Esophagus muscularis mucosa (tissue), 4 donors: ENCODE measurements at regions of chr17 and their contacts with region 1.

Region 1: DNA sequence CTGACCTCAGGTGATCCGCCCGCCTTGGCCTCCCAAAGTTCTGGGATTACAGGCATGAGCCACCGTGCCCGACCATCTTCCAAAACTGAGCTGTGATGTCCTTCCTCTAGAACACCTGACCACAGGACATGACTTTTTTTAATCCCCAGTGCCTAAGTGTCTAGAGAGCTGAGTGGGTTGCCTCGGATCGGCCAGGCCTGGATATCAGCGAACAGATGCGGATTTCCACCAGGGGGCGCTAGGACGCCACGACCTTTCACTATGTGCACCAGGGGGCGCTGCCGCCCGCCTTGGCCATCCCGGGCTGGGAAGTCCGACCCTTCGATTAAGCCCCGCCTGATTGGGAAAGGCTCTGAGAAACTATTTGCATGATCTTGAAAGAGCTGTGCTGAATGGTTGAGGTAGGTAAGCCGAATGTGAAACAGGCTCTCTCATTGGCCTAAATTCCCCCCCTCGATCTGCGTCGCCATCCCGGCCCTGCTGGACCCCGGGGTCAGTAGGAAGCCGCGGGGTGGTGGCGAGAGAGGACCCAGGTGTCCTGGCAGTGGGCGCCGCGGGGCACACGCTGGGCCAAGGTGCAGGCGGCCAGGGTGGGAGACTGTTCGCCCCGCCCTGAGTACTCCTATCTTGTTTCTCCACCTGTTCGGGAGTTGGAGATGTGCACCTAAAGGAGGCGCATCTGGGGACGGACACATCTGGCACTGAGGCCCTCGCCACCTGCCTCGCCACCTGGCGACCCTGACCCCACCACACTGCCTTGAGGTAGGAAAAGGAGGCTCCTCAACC is at the start of gene ACBD4:
- DNase-seq: peak; percentile 99
- H3K4me3 ChIP-seq: peak within 1 kb of the TSS; percentile 76 to 96 (median 84)
- H3K27ac ChIP-seq: peak within 1 kb of the TSS; percentile 89 to 93 (median 92)
- H3K4me1 ChIP-seq: peaks cover 27 to 50% (median 40%) of the 10 kb centered on the region in 4 donors
- H3K27me3 ChIP-seq: no peaks in the 10 kb centered on the region
- CTCF ChIP-seq: peak; percentile 96 to 100 (median 100)
- EP300 ChIP-seq: no peak
- POLR2A ChIP-seq: no peak
- total RNA-seq, gene ACBD4: 20.9 to 34.8 (median 23.5) TPM

Region 2: DNA sequence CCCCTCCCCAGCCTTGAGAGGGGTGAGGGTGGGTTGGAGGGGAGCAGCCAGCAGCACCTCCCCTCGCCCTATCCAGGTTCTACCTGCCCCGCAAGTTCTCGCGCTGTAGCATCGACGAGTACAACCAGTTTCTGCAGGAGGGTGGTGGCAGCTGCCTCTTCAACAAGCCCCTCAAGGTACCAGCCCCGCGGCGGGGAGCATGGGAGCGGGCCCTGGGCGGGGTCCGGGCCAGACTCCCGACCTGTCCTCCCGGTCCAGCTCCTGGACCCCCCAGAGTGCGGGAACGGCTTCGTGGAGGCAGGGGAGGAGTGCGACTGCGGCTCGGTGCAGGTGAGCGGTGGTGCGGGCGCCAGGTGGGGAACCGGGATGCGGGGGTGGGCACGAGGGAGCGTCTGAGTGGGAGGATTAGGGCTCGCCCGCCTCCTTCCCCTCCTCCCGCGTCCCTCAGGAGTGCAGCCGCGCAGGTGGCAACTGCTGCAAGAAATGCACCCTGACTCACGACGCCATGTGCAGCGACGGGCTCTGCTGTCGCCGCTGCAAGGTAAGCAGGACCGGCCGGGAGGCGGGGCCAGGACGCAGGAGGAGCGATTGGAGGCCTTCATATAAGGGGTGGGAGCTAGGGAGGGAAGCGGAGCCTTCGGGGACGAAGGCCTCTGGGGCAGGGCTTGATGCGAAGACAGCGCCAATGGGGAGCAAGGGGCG is 360.1 kb before region 1 on chr17:
- intact Hi-C with region 1: loop called (anchors 5 kb)
- DNase-seq: peak; percentile 98
- H3K4me3 ChIP-seq: peak overlapping the region; percentile 60 to 67 (median 63)
- H3K27ac ChIP-seq: peak overlapping the region; percentile 5 to 80 (median 70)
- H3K4me1 ChIP-seq: peaks cover 25 to 39% (median 36%) of the 10 kb centered on the region in 4 donors
- H3K27me3 ChIP-seq: peaks cover 0 to 35% (median 9%) of the 10 kb centered on the region in 4 donors
- CTCF ChIP-seq: peak in 1 of 3 experiments; percentile 21
- EP300 ChIP-seq: no peak
- POLR2A ChIP-seq: no peak

Region 3: GRCh38 chr17:44919885-44920564 is 215.4 kb before region 1 on chr17:
- intact Hi-C with region 1: loop called (anchors 5 kb)
- DNase-seq: no peak
- H3K4me3 ChIP-seq: no peak overlapping the region
- H3K27ac ChIP-seq: peak overlapping the region in 1 of 4 donors; percentile 5
- H3K4me1 ChIP-seq: peaks cover 25 to 36% (median 29%) of the 10 kb centered on the region in 4 donors
- H3K27me3 ChIP-seq: peaks cover 0 to 2% (median 0%) of the 10 kb centered on the region in 4 donors
- CTCF ChIP-seq: peak; percentile 81 to 94 (median 88)
- EP300 ChIP-seq: no peak
- POLR2A ChIP-seq: no peak

Region 4: GRCh38 chr17:45051060-45051719 is 84.2 kb before region 1 on chr17 and contains the start of gene DCAKD:
- intact Hi-C with region 1: loop called (anchors 5 kb)
- DNase-seq: peak; percentile 94
- H3K4me3 ChIP-seq: peak within 1 kb of the TSS; percentile 61 to 79 (median 66)
- H3K27ac ChIP-seq: peak within 1 kb of the TSS; percentile 89 to 96 (median 92)
- H3K4me1 ChIP-seq: peaks cover 12 to 35% (median 30%) of the 10 kb centered on the region in 4 donors
- H3K27me3 ChIP-seq: no peaks in the 10 kb centered on the region
- CTCF ChIP-seq: peak in 1 of 3 experiments; percentile 10
- EP300 ChIP-seq: no peak
- POLR2A ChIP-seq: peak; percentile 78
- total RNA-seq, gene DCAKD: 50.3 to 68.8 (median 57.9) TPM

Region 5: GRCh38 chr17:45098869-45099616 is 36.3 kb before region 1 on chr17:
- intact Hi-C with region 1: loop called (anchors 5 kb)
- DNase-seq: peak; percentile 96
- H3K4me3 ChIP-seq: no peak overlapping the region
- H3K27ac ChIP-seq: peak overlapping the region; percentile 61 to 91 (median 76)
- H3K4me1 ChIP-seq: peaks cover 42 to 54% (median 48%) of the 10 kb centered on the region in 4 donors
- H3K27me3 ChIP-seq: no peaks in the 10 kb centered on the region
- CTCF ChIP-seq: peak; percentile 85 to 92 (median 90)
- EP300 ChIP-seq: no peak
- POLR2A ChIP-seq: no peak

Region 6: DNA sequence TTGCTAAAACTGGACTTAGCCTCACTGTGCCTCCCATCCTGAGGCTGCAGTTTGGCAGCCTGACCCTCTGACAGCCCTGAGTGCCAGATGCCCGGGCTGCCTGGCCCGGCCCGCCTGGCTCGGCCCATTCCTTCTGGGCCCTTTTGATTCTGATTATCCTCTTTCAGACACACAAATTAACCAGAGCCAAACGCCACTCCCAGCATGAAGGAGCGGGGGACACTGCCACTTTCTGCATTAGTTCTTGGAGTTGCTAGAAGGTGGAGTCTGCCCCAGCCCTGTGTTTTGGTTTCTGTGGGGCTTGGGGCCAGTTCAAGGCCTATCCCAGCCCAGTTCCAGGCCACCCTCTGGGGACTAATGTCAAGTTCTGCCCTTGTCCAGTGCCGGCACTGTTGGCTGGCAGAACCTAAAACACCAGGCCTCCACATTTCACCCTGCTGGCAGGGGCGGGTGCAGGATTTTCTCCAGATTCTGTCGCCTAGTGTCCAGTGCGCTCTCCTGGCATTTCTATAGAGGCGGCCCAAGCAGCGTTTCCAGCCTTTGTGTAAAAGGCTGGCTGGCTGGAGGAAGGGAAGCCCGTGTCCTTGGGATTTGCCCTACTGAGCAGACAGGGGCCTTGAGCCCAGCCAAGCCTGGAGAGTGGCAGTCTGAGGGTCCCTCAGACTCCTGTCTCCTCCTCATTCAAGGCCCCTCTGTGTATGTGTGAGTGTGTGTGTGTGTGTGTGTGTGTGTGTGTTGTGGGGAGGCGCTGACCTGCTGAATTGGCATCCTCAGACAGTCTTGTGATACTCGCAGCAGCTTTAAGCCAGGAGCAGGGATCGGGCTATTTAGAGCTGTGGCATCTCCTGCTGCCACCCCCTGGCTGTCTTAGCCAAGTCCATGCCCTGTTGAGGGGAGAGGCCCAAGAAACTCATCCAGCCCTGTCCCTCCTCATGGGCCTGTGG is 24.4 kb before region 1 on chr17:
- intact Hi-C with region 1: no loop called
- DNase-seq: no peak
- H3K4me3 ChIP-seq: no peak overlapping the region
- H3K27ac ChIP-seq: peak overlapping the region; percentile 81 to 85 (median 82)
- H3K4me1 ChIP-seq: peaks cover 49 to 67% (median 65%) of the 10 kb centered on the region in 4 donors
- H3K27me3 ChIP-seq: no peaks in the 10 kb centered on the region
- CTCF ChIP-seq: no peak
- EP300 ChIP-seq: no peak
- POLR2A ChIP-seq: no peak

Region 7: GRCh38 chr17:45172454-45173286 is 37.3 kb after region 1 on chr17:
- intact Hi-C with region 1: no loop called
- DNase-seq: no peak
- H3K4me3 ChIP-seq: peak overlapping the region; percentile 48 to 63 (median 52)
- H3K27ac ChIP-seq: peak overlapping the region; percentile 88 to 97 (median 90)
- H3K4me1 ChIP-seq: peaks cover 25 to 57% (median 54%) of the 10 kb centered on the region in 4 donors
- H3K27me3 ChIP-seq: no peaks in the 10 kb centered on the region
- CTCF ChIP-seq: peak in 1 of 3 experiments; percentile 8
- EP300 ChIP-seq: no peak
- POLR2A ChIP-seq: no peak

Region 8: DNA sequence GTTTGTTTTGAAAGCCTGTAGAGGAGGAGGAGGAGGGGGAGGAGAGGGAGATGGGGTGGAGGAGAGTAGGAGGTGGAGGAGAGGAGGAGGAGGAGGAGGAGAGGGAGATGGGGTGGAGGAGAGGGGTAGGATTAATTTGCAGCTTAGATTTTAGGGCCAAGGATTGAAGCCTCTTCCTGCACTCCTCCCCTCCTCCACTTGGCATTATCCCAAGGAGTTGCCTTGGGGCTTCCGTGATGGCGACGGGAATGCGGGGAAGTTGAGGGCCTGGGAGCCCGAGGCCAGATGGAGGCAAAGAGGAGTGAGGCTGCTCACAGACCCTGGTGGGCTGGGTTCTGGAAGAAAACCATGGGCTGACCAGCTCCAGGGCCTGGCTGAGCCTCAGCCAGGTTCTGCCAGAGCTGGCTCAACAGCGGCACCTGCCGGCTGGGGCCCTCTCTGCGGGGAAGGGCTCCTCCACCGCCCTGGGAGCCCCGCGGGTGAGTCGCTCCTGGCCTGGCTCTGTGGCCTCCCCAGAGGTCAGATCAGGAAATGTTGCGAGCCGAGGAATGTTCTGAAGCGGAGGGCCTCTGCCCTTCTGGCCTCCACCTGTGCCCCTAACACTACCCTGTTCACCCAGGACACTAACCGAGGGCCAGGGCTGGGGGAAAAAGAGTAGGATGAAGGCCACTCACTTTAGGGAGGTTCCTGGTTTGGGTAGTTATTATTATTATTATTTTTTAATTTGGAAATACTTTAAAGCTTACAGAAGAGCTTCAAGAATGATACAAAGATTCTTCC is 62.4 kb after region 1 on chr17:
- intact Hi-C with region 1: loop called (anchors 1 kb)
- DNase-seq: peak; percentile 96
- H3K4me3 ChIP-seq: peak overlapping the region in 3 of 4 donors; percentile 5 to 23 (median 22)
- H3K27ac ChIP-seq: peak overlapping the region; percentile 61 to 74 (median 72)
- H3K4me1 ChIP-seq: peaks cover 8 to 20% (median 16%) of the 10 kb centered on the region in 4 donors
- H3K27me3 ChIP-seq: no peaks in the 10 kb centered on the region
- CTCF ChIP-seq: peak in 2 of 3 experiments; percentile 99
- EP300 ChIP-seq: no peak
- POLR2A ChIP-seq: no peak

Region 9: GRCh38 chr17:45293413-45294211 is 158.2 kb after region 1 on chr17:
- intact Hi-C with region 1: no loop called
- DNase-seq: peak; percentile 95
- H3K4me3 ChIP-seq: no peak overlapping the region
- H3K27ac ChIP-seq: peak overlapping the region; percentile 79 to 99 (median 84)
- H3K4me1 ChIP-seq: peaks cover 98 to 100% (median 100%) of the 10 kb centered on the region in 4 donors
- H3K27me3 ChIP-seq: no peaks in the 10 kb centered on the region
- CTCF ChIP-seq: peak in 1 of 3 experiments; percentile 3
- EP300 ChIP-seq: no peak
- POLR2A ChIP-seq: no peak

Region 10: DNA sequence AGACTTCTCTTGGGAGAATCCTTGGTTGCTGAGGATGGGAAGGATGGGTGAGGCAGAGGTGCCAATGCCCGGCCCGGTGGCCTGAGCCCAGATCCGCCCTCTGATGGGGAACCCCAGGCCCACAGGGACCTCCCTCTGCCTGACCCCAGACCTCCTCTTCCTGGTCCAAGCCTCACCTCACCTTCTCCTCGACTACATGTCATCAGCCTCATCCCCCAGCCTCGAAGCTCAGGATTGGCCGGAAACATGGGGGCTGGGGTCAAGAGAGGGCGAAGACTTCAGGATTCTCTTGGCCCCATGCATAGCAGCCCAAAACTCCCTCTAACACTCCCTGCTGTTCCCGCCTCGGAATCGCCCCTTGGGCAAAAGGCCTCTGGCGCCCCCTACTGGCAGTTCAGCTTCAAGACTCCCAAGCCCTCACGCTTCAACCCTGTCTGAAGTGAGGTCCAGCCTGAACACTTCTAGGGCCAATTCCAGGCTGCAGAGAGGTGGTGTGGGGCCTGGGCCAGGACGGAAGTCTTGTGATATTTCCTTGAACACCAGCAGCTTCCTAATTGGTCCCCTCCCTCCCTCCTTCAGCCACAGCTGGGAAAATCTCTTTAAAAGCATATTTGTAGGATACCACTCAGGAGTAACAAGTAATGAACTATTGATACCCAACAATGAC is 250.1 kb after region 1 on chr17:
- intact Hi-C with region 1: loop called (anchors 5 kb)
- DNase-seq: peak; percentile 97
- H3K4me3 ChIP-seq: no peak overlapping the region
- H3K27ac ChIP-seq: no peak overlapping the region
- H3K4me1 ChIP-seq: peaks cover 0 to 8% (median 7%) of the 10 kb centered on the region in 4 donors
- H3K27me3 ChIP-seq: peaks cover 0 to 25% (median 0%) of the 10 kb centered on the region in 4 donors
- CTCF ChIP-seq: peak in 2 of 3 experiments; percentile 98 to 99
- EP300 ChIP-seq: no peak
- POLR2A ChIP-seq: no peak